Activated CD4-positive, alpha-beta T cell treated with anti-CD3 and anti-CD28 coated beads, Interleukin-2, amount 10 ng/mL, durations not matched to agents 24 days and 14 days (primary cell): ENCODE measurements at regions of chr6 and their contacts with region 1.

Region 1: DNA sequence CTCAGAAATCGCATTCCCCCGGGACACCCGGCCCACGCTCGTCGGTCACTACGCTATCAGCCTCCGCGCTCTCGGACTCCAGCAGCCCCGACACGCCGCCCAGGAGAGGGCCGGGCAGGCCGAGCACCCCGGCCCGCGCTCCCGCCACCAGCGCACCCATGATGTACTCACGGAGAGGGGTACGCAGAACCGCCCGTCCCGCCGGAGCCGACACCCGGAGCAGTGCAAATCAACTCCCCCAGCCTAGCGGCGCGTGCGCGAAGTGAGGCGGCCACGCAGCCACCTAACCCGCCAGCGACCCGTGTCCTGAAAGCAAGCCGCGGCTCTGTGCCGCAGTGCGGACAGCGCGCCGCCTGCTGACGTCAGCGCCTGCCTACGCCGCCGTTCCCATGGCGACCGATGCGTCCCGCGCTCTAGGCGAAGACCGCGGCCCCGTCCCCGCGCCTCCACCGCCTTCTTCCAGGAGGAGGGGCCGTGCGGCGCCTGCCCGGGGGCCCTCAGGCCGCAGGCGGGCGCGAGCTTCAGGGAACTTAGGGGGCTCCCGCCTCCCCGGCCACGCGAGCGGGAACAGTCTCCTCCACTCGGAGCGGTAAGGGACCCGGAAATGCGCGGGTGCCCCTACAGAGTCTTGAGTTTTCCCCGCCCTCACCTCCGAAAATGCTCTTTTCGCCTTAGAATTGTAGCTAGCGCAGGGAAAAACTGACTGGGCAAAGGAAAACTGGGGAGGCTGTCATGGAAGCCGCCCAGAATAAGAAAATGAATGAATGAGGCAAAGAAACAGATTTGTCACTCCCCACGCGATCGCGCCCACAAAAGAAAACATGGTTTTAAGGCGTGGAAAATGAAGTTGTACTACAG is at the start of gene AHI1:
- DNase-seq: peak; percentile 97
- H3K4me3 Mint-ChIP-seq: no peak within 1 kb of the TSS
- H3K27ac Mint-ChIP-seq: no peak within 1 kb of the TSS
- H3K4me1 Mint-ChIP-seq: peaks cover 18% of the 10 kb centered on the region
- H3K27me3 Mint-ChIP-seq: no peaks in the 10 kb centered on the region
- total RNA-seq, gene AHI1: 155 and 160 TPM in 2 replicates

Region 2: DNA sequence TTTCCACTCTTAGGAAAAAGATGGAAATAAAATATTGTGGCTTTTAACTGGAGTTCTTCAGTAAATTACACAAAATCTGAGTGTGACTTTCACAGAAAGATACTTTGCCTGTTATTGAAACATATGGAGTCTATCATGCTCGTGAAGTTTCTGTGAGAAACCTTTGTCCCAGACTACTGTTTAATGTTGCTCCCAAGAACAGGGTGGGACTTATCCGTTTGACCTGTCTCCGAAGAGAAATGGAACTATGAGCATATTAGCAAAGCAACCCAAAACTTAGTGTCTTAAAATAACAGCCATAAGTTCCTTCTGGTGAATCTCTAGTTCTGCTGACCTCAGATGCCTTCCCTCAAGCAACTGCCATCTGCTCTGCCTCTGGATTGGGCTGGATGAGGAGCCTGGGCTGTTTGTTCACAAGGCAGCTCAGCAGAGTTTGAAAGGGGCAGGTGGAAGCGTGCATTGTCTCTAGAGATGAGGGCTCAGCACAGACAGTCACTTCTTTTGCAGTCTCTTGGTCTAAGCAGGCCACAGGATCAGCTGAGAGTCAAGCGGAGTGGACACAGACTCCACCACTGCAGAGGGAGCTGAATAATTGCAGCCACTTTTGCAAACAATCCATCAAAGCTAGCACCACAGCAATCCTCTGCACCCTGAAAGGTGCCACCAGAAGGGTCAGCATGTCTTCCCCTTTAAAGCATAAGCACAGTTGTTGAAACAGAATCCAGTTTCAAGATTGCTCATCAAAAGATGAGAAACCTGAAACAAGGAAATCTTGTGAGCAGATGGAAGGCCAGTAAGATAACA is 263.8 kb before region 1 on chr6:
- intact Hi-C with region 1: no loop called
- DNase-seq: no peak
- H3K4me3 Mint-ChIP-seq: no peak overlapping the region
- H3K27ac Mint-ChIP-seq: no peak overlapping the region
- H3K4me1 Mint-ChIP-seq: peaks cover 27% of the 10 kb centered on the region
- H3K27me3 Mint-ChIP-seq: peaks cover 1% of the 10 kb centered on the region

Region 3: DNA sequence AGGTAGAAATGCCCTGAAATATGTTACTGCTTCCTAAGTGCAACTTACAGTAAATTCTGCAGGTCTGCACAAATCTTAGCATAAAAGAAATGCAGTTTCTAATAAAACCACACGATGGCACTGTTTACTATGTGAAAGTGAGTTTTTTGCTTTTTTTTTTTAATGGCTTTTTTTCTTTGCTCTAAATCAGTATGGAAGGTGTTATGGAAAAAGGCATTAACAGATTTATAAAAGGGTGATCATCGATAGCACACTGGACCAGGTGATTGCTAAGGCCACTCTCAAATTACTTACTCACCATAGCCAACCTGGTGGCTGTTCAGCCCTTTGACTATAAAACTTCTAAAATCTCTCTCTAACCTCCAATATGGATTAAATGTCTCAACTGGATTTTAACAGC is 45.9 kb before region 1 on chr6:
- intact Hi-C with region 1: loop called (anchors 2 kb)
- DNase-seq: peak; percentile 63
- H3K4me3 Mint-ChIP-seq: no peak overlapping the region
- H3K27ac Mint-ChIP-seq: no peak overlapping the region
- H3K4me1 Mint-ChIP-seq: peaks cover 6% of the 10 kb centered on the region
- H3K27me3 Mint-ChIP-seq: no peaks in the 10 kb centered on the region

Region 4: GRCh38 chr6:135577059-135577538 is 79.5 kb after region 1 on chr6:
- intact Hi-C with region 1: loop called (anchors 2 kb)
- DNase-seq: peak; percentile 74
- H3K4me3 Mint-ChIP-seq: peak overlapping the region; percentile 39
- H3K27ac Mint-ChIP-seq: peak overlapping the region; percentile 96
- H3K4me1 Mint-ChIP-seq: peaks cover 45% of the 10 kb centered on the region
- H3K27me3 Mint-ChIP-seq: no peaks in the 10 kb centered on the region

Region 5: GRCh38 chr6:136249811-136250685 is 752.4 kb after region 1 on chr6 and contains the start of gene MTFR2:
- intact Hi-C with region 1: loop called (anchors 1 kb)
- DNase-seq: peak; percentile 98
- H3K4me3 Mint-ChIP-seq: peak within 1 kb of the TSS; percentile 97
- H3K27ac Mint-ChIP-seq: peak within 1 kb of the TSS; percentile 91
- H3K4me1 Mint-ChIP-seq: peaks cover 52% of the 10 kb centered on the region
- H3K27me3 Mint-ChIP-seq: no peaks in the 10 kb centered on the region
- total RNA-seq, gene MTFR2: 24.4 and 24.6 TPM in 2 replicates

Region 6: DNA sequence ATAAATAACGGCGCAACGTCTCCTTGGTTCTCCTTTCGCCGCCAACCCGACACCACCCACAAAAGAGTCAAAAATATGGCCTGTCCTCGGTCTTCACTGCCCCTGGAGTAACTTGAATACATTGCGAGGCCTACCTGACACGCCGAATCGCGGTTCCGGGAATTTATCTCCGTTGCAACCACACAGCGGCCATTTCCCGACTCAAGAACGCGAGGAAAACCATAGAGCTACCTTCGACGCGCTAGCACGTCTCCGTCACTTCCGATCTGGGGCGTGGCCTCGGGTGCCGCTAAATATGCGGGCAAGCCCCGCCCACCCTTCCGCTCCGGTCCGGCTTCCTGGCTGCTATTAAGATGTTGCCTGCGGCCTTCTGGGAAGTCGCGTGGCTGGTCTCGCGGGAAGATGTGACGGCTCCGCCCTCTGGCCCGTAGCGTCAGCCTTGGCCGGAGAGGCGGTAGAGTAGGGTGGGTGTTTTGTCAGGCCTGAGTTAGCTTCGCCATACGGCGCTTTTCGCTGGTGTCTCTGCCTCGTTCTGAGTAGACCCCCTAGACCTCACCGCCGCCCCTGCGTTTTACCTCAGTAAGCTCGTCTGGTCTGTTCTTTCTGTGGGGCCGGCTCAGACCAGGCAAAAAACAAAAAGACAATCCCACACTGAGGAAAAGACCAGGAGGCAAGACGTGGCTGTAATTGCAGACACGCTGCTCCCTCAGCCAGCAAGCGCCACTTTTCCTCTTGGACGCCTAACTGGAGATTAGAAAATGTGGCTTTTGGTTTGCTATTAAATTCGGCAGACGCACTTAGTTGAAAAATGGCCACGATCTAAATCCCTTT is 792.2 kb after region 1 on chr6 and contains the start of gene BCLAF1:
- intact Hi-C with region 1: loop called (anchors 1 kb)
- DNase-seq: peak; percentile 100
- H3K4me3 Mint-ChIP-seq: peak within 1 kb of the TSS; percentile 92
- H3K27ac Mint-ChIP-seq: peak within 1 kb of the TSS; percentile 100
- H3K4me1 Mint-ChIP-seq: peaks cover 41% of the 10 kb centered on the region
- H3K27me3 Mint-ChIP-seq: peaks cover 2% of the 10 kb centered on the region
- total RNA-seq, gene BCLAF1: 267 TPM in 2 replicates